CD14-positive monocyte (primary cell): ENCODE measurements at regions of chr13 and their contacts with region 1.

Region 1: GRCh38 chr13:21638319-21639282 is 32.3 kb upstream of the FGF9 start:
- DNase-seq: peak; percentile 6 to 31 (median 21)
- H3K4me3 ChIP-seq: no peak overlapping the region
- H3K4me3 Mint-ChIP-seq: no peak overlapping the region
- H3K27ac ChIP-seq: no peak overlapping the region
- H3K27ac Mint-ChIP-seq: no peak overlapping the region
- H3K4me1 ChIP-seq: peaks cover 3 to 8% of the 10 kb centered on the region in 2 donors
- H3K4me1 Mint-ChIP-seq: peaks cover 8% of the 10 kb centered on the region
- H3K27me3 ChIP-seq: peaks cover 0 to 4% of the 10 kb centered on the region in 2 donors
- H3K27me3 Mint-ChIP-seq: peaks cover 4 to 9% (median 8%) of the 10 kb centered on the region in 3 donors
- CTCF ChIP-seq: peak; percentile 98

Region 2: GRCh38 chr13:21673789-21674489 is 35.3 kb after region 1 on chr13:
- intact Hi-C with region 1: no loop called
- DNase-seq: peak in 1 of 3 donors; percentile 2
- H3K4me3 ChIP-seq: peak overlapping the region; percentile 14 to 73 (median 31)
- H3K4me3 Mint-ChIP-seq: peak overlapping the region; percentile 70 to 90
- H3K27ac ChIP-seq: no peak overlapping the region
- H3K27ac Mint-ChIP-seq: no peak overlapping the region
- H3K4me1 ChIP-seq: peaks cover 40 to 59% of the 10 kb centered on the region in 2 donors
- H3K4me1 Mint-ChIP-seq: peaks cover 43% of the 10 kb centered on the region
- H3K27me3 ChIP-seq: peaks cover 80 to 93% of the 10 kb centered on the region in 2 donors
- H3K27me3 Mint-ChIP-seq: peaks cover 75 to 94% (median 81%) of the 10 kb centered on the region in 3 donors
- CTCF ChIP-seq: no peak

Region 3: DNA sequence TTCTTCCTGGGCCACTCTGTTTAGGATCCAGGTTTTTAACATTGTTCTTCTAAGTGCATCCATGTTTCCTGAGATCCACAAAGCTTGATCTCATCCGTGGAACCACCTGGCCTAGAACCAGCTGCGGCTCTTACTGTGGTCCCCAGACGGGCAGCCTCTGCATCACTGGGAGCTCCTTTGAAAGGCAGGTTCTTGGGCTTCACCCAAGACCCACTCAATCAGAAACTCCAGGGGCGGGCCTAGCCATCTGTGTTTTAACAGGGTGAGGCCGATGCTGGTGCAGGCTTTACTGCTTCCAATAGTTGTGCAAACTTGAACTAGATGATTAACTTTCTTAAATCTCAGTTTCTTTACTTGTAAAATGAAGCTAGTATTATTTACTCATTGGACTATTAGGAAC is 638.0 kb after region 1 on chr13:
- intact Hi-C with region 1: loop called in 1 of 2 experiments (anchors 2 kb)
- DNase-seq: no peak
- H3K4me3 ChIP-seq: no peak overlapping the region
- H3K4me3 Mint-ChIP-seq: no peak overlapping the region
- H3K27ac ChIP-seq: no peak overlapping the region
- H3K27ac Mint-ChIP-seq: no peak overlapping the region
- H3K4me1 ChIP-seq: no peaks in the 10 kb centered on the region
- H3K4me1 Mint-ChIP-seq: no peaks in the 10 kb centered on the region
- H3K27me3 ChIP-seq: no peaks in the 10 kb centered on the region
- H3K27me3 Mint-ChIP-seq: peaks cover 0 to 3% (median 2%) of the 10 kb centered on the region in 3 donors
- CTCF ChIP-seq: no peak

Region 4: DNA sequence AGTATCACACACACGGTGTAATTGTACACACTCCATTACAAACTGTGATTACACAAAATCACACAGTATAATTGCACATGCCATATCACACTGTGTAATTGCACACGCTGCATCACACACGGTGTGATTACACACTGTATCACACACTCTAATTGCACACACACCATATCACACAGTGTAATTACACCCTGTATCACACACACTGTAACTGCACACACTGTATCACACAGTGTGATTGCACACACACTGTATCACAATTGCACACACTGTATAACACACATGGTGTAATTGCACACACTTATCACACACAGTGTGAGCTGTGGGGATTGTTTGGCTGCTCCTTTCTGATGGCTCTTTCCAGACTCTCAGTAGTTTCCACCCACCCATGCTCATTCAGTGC is 1379.5 kb after region 1 on chr13:
- intact Hi-C with region 1: loop called in 1 of 2 experiments (anchors 5 kb)
- DNase-seq: no peak
- H3K4me3 ChIP-seq: no peak overlapping the region
- H3K4me3 Mint-ChIP-seq: no peak overlapping the region
- H3K27ac ChIP-seq: no peak overlapping the region
- H3K27ac Mint-ChIP-seq: no peak overlapping the region
- H3K4me1 ChIP-seq: no peaks in the 10 kb centered on the region
- H3K4me1 Mint-ChIP-seq: no peaks in the 10 kb centered on the region
- H3K27me3 ChIP-seq: no peaks in the 10 kb centered on the region
- H3K27me3 Mint-ChIP-seq: peaks cover 0 to 2% (median 0%) of the 10 kb centered on the region in 3 donors
- CTCF ChIP-seq: no peak